ENCODE measurements at regions of chr2 and their contacts with region 1.

Region 1: DNA sequence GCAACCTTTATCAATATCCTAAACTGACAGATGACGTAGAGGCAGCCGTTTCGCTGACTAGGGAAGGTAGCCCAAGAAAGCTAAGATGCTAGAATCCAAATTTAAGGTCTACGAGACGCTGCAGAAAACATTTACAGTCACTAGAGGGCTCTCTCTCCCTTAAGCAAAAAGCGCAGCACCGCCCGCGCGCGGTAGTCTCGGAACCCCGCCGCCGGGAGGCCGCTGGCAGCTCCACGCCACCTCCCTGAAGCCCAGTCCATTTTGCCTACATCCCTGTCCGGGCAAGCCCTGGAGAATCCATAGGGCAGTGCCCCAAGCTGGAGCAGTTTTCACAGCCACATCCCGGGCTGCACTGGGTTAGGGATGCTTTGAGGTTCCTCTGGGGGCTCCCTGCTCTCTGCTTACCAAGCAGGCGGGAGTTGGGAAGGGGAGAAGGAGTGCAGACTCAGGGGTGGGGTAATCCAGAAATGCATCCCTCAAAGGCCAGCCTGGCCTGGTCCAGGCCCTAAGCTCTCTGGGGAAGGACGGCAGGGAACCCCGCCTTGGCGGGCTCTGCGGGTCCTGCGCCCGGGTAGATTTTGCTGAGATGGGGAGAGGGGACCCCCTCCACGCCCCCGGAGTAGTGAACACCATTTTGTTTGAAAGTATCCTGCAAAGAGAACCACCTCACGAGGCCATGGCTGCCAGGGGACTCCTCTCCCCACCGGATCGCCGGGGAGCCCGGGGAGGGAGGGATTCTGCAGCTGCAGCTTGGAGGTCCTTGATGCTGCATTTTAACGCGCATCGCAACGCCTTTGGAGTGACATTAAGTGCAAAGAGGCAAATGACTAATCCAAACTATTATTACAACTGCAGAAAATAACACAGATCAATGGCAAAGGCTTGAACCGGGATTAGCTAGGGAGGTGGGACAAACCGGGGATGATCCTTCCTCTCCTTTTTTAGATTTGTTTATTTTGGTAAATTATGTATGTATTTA is 1.3 kb upstream of the DPYSL5 start:
- DNase-seq: peak in 1 of 2 donors; percentile 71
- ATAC-seq: peak; percentile 88

Region 2: DNA sequence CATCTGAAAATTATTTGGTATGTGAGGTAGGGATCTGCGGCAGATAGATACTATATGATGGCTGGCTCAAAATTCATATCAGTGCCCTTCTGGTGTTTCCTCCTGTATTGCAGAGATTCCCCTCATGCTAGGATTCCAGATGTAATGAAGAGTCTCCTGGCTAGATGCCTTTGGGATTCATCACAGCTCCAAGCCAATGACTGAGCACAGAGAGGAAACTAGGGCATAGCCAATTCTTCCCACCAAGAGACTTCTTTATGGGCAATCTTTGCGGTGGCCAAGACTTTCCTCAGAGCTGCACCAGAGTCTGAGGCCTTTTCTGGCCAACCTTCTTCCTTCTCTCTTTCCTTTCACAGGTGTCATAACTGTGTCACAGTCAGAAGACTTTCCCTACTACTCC is 179.9 kb before region 1 on chr2:
- intact Hi-C with region 1: no loop called
- DNase-seq: no peak
- ATAC-seq: no peak

Region 3: GRCh38 chr2:26682165-26682564 is 164.5 kb before region 1 on chr2:
- intact Hi-C with region 1: no loop called
- DNase-seq: peak in 1 of 2 donors; percentile 5
- ATAC-seq: no peak

Region 4: GRCh38 chr2:26933431-26934334 is 87.1 kb after region 1 on chr2:
- intact Hi-C with region 1: loop called in 1 of 2 experiments (anchors 10 kb)
- DNase-seq: no peak
- ATAC-seq: no peak

Region 5: GRCh38 chr2:26942543-26943295 is 96.1 kb after region 1 on chr2:
- intact Hi-C with region 1: loop called (anchors 5 to 10 kb)
- DNase-seq: peak in 1 of 2 donors; percentile 73
- ATAC-seq: peak; percentile 67

Region 6: DNA sequence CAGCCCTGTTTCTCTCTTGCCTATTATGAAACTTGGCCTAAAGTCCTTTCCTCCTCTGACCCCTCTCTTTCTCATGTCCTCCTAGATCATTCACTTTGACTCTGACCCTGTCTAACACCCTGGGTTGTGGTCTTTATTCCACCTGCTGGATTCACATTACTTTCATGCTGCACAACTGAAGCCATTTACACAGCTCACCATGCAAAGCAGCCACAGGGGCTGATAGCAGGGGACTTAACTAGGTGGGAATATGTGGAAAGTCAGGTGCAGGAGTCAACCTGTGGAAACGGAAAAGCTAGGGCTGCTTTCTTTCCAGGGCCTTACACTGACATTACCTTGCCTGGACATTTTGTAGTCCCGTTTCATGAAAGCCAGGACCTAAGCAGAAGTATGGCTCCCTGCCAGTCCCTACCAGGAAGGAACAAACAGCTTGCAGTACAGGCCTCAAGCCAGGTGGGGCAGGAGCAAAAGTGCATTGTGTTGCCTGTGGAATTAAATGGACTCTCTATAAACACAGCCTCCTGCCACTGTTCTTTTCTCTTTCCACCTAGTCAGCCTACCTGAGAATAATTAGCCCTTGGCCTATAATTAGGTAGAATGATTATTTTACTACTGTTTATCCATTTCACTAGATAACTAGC is 135.6 kb after region 1 on chr2:
- intact Hi-C with region 1: no loop called
- DNase-seq: peak; percentile 84 to 87
- ATAC-seq: peak; percentile 95

Region 7: DNA sequence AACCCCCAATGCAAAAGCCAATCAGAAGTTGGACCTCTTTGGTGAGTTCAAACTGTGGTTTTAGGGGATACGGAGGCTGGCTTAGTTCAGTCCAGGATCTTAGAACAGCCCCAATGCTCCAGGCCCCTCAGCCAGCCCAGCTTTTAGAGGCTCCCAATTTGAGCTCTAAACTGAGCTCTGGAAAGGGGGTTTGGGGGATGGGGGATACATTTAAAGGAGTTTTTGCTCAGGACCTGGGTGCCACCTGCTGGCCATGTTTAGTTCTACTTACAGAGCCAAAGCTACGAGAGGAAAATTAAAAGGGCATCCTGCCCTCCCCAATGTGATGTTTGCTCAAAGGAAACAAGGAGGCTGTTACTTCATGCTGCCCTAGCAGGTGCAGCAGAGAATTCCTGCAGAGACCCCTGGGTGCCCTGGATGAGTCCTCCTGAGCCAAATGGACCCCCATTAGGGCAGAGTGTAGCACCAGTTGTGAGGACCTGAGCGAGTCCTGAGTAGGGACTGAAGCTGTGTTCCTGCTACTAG is 170.2 kb after region 1 on chr2:
- intact Hi-C with region 1: loop called in 1 of 2 experiments (anchors 10 kb)
- DNase-seq: peak in 1 of 2 donors; percentile 76
- ATAC-seq: peak; percentile 31